CD4-positive, alpha-beta memory T cell (primary cell): ENCODE measurements at regions of chr22 and their contacts with region 1.

Region 1: DNA sequence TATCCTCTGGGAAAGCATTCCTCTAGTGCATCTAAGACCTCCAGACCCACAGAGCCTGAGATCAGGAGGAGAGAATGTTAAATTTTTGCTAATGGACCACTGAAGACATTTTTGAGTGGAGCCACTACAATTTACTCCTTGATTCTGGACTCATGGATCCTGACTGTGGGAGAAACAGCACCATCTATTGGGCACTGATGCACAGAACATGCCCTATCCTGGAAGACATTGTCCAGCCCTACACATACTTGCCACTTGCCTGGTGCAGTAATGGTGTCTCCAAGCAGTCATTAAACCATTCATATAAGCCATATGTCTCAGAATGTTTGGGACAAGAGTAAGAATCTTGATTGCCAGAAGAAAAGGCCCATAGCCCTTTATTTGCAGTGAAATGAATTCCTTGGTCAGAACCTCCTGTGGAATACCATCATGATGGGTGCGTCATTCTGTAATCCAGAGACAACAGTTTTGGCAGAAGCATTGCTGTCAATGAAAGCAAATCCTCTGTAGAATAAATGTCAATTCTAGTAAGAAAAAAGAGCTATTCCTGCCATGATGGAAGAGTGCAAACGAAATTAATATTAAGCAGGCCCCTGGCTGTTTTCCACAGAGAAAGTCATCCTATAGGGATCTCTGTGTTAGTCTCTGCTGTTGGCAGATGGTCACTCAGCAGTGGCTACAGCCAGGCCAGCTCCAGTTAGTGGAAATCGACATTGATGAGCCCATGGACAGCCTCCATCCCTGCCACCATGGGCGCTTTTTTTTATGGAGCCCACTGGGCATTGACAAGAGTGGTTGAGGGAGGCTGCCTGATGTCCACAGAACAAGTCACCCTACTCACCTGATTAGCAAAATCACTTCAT is 43.5 kb downstream of the GGTLC2 start:
- DNase-seq: peak in 3 of 5 donors; percentile 14 to 19 (median 15)
- H3K4me3 ChIP-seq: no peak overlapping the region
- H3K4me3 Mint-ChIP-seq: no peak overlapping the region
- H3K27ac ChIP-seq: no peak overlapping the region
- H3K27ac Mint-ChIP-seq: peak overlapping the region in 1 of 7 donors; percentile 64
- H3K4me1 ChIP-seq: no peaks in the 10 kb centered on the region
- H3K4me1 Mint-ChIP-seq: no peaks in the 10 kb centered on the region
- H3K27me3 ChIP-seq: no peaks in the 10 kb centered on the region
- H3K27me3 Mint-ChIP-seq: no peaks in the 10 kb centered on the region

Region 2: DNA sequence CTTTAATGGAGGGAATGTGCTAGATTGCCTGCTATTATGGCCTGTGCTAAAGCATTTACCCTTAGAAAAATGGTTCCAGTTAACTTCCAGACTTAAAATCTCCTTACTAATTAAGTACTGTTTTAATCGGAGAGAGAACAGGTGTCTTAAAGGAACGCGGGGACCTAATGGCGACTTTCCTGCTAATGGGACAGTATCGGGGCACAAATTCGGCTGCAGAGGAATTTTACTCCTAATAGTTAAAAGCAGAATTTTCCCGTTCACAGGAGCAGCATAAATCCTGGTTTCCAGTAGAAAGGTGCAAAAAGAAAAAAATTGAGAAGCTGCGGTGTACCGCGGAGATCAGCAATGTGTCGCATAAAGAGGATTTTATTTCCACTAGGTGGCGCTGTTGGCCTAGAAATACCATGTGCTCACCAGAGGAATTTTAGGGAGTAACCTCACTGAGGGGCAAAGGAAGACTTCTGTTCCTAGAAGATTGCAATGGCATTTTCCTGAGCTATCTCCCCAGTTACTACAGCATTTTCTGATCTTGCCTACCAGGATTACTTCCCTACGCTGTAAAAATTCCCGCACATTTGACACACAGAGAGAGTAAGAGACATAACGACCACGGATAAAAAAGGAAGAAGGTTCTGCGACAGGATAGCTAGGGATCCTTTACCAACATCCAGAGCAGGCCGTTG is 223.9 kb before region 1 on chr22:
- CTCF ChIA-PET with region 1: no interaction called
- POLR2A ChIA-PET with region 1: no interaction called
- intact Hi-C with region 1: loop called (anchors 5 kb)
- DNase-seq: peak; percentile 38 to 53 (median 49)
- H3K4me3 ChIP-seq: no peak overlapping the region
- H3K4me3 Mint-ChIP-seq: no peak overlapping the region
- H3K27ac ChIP-seq: no peak overlapping the region
- H3K27ac Mint-ChIP-seq: peak overlapping the region in 1 of 7 donors; percentile 37
- H3K4me1 ChIP-seq: no peaks in the 10 kb centered on the region
- H3K4me1 Mint-ChIP-seq: no peaks in the 10 kb centered on the region
- H3K27me3 ChIP-seq: peaks cover 4% of the 10 kb centered on the region
- H3K27me3 Mint-ChIP-seq: peaks cover 30 to 45% of the 10 kb centered on the region in 2 donors

Region 3: DNA sequence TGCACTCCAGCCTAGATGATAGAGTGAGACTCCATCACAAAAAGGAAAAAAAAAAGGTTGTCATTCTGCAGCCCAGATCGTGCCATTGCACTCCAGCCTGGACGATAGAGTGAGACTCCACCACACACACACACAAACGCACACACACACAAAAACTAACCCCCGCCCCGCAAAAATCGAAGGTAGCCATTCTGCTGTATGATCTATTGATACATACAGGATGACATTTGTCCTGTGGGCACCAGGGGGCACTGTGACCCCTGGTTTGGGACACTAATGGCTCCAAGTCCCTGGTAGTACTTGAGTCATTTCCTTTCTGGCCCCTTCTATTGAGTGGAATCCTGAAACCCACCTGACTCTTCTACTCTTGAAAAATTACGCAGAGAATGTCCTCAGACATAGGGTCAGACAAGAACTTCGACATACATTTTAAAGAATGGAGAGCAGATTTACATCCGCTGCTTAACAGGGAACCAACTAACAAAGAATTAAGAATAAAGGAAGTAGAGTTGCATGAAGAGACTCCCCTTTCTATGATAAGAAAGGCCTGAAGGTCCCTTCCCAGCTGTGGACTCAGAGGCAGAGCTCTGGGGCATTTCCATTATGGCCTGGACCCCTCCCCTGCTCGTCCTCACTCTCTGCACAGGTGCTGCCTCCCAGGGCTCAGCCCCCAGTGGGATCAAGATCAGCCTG is 93.8 kb before region 1 on chr22:
- CTCF ChIA-PET with region 1: no interaction called
- POLR2A ChIA-PET with region 1: no interaction called
- intact Hi-C with region 1: loop called (anchors 2 kb)
- DNase-seq: peak; percentile 31 to 59 (median 36)
- H3K4me3 ChIP-seq: no peak overlapping the region
- H3K4me3 Mint-ChIP-seq: no peak overlapping the region
- H3K27ac ChIP-seq: no peak overlapping the region
- H3K27ac Mint-ChIP-seq: no peak overlapping the region
- H3K4me1 ChIP-seq: no peaks in the 10 kb centered on the region
- H3K4me1 Mint-ChIP-seq: peaks cover 0 to 4% (median 2%) of the 10 kb centered on the region in 4 donors
- H3K27me3 ChIP-seq: no peaks in the 10 kb centered on the region
- H3K27me3 Mint-ChIP-seq: peaks cover 3 to 6% of the 10 kb centered on the region in 2 donors

Region 4: DNA sequence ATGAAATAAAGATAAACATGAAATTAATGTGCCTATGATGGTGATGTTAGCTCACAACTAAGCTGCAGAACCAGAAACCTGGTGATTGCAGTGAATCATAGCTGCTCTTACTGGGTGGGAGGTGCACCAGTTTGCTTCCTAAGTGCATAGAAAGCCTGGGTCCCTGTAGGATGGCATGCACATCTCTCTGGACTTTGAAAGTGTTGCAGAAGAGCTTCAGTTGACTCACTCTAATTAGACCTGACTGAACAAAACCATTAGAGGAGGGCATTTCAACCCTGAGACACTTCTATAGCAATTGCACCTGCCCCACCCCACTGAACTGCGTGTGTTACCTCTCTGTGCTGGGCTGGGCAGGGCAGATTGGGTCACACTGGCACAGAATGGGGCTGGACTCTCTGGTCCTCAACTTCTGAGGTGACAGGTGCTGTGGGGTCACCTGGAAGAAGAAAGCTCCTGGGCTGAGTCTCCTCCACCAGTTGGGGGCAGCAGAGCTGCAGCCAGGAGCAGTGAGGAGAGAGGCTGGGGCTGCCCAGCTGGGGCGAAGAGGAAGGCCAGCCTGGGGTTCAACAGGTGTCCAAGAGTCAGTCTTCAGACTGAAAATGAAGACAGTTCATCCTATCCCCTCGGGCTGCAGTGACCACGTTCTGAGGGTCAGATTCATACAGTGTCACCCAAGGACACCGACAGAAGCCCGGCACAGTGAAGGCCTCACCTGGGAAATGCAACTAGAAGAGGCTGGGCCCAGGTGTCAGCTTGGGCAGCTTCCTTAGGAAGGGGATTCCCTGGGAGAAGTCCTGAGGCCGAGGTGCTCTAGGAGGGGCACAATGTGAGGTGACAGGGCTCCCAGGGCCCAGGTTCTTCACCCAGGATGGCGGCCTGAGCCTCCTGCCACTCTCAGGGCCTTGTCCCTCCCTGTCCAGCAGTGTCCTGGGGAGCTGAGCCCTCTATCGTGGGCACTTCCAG is 14.7 kb after region 1 on chr22:
- CTCF ChIA-PET with region 1: interaction called, 24 read pairs
- POLR2A ChIA-PET with region 1: no interaction called
- intact Hi-C with region 1: no loop called
- DNase-seq: no peak
- H3K4me3 ChIP-seq: no peak overlapping the region
- H3K4me3 Mint-ChIP-seq: no peak overlapping the region
- H3K27ac ChIP-seq: no peak overlapping the region
- H3K27ac Mint-ChIP-seq: peak overlapping the region in 1 of 7 donors; percentile 4
- H3K4me1 ChIP-seq: no peaks in the 10 kb centered on the region
- H3K4me1 Mint-ChIP-seq: no peaks in the 10 kb centered on the region
- H3K27me3 ChIP-seq: no peaks in the 10 kb centered on the region
- H3K27me3 Mint-ChIP-seq: peaks cover 0 to 2% of the 10 kb centered on the region in 2 donors

Region 5: DNA sequence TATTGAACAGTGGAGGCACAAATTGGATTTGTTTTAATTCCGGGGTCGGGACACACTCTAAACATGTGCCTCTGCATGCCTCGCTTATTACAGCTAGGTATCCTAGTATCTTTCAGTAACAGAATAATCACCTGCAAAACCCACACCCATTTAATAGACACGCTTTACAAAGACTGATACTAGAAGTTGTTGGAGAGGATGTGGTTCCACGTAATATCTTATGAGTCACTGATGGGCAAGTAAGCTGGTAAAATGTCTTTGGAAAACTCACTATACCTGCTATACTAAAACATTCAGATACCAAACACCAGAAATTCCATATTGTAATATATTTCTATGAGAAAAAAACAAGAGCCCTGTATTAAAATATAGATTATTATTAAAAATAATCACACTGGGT is 40.5 kb after region 1 on chr22:
- CTCF ChIA-PET with region 1: no interaction called
- POLR2A ChIA-PET with region 1: no interaction called
- intact Hi-C with region 1: no loop called
- DNase-seq: no peak
- H3K4me3 ChIP-seq: no peak overlapping the region
- H3K4me3 Mint-ChIP-seq: no peak overlapping the region
- H3K27ac ChIP-seq: no peak overlapping the region
- H3K27ac Mint-ChIP-seq: no peak overlapping the region
- H3K4me1 ChIP-seq: no peaks in the 10 kb centered on the region
- H3K4me1 Mint-ChIP-seq: peaks cover 12 to 31% (median 14%) of the 10 kb centered on the region in 4 donors
- H3K27me3 ChIP-seq: no peaks in the 10 kb centered on the region
- H3K27me3 Mint-ChIP-seq: peaks cover 1 to 11% of the 10 kb centered on the region in 2 donors